A673 (cell line): ENCODE measurements at regions of chr12 and their contacts with region 1.

Region 1: GRCh38 chr12:75334384-75335030 is at the start of gene GLIPR1L1:
- DNase-seq: peak; percentile 92
- H3K4me3 ChIP-seq: peak within 1 kb of the TSS; percentile 19
- H3K27ac ChIP-seq: no peak within 1 kb of the TSS
- H3K4me1 ChIP-seq: no peaks in the 10 kb centered on the region
- H3K27me3 ChIP-seq: no peaks in the 10 kb centered on the region
- CTCF ChIP-seq: peak; percentile 87
- total RNA-seq, gene GLIPR1L1: not detected in 2 replicates

Region 2: GRCh38 chr12:74689071-74689655 is 645.3 kb before region 1 on chr12:
- CTCF ChIA-PET with region 1: no interaction called
- POLR2A ChIA-PET with region 1: no interaction called
- intact Hi-C with region 1: loop called (anchors 5 kb)
- DNase-seq: peak; percentile 61
- H3K4me3 ChIP-seq: no peak overlapping the region
- H3K27ac ChIP-seq: no peak overlapping the region
- H3K4me1 ChIP-seq: no peaks in the 10 kb centered on the region
- H3K27me3 ChIP-seq: no peaks in the 10 kb centered on the region
- CTCF ChIP-seq: peak; percentile 77

Region 3: DNA sequence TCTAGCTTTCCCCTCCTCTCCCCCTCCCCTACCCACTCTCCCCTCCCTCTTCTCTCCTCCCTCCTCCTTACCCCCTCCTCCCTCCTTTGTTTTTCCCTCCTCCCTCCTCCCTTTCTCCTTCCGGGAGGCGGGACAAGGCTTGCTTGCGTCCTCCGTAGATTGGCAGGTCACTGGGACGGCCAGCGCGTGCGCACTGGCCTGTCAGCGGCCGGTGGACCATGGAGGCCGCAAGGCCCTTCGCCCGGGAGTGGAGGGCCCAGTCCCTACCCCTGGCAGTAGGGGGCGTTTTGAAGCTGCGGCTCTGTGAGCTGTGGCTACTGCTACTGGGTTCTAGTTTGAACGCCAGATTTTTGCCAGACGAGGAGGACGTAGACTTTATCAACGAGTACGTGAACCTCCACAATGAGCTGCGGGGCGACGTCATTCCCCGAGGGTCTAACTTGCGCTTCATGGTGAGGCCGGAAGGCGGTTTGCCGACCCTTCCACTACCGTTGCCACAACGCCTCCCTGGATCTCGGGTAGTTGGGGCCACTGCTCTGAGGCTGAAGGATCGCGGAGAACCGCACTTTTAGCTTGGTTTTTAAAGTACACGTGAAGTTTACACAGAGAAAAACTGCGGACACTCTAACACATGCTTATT is 56.5 kb after region 1 on chr12 and contains the start of gene GLIPR1L2:
- CTCF ChIA-PET with region 1: interaction called, 6 read pairs
- POLR2A ChIA-PET with region 1: no interaction called
- intact Hi-C with region 1: loop called (anchors 5 kb)
- DNase-seq: peak; percentile 99
- H3K4me3 ChIP-seq: peak within 1 kb of the TSS; percentile 56
- H3K27ac ChIP-seq: peak within 1 kb of the TSS; percentile 84
- H3K4me1 ChIP-seq: peaks cover 9% of the 10 kb centered on the region
- H3K27me3 ChIP-seq: no peaks in the 10 kb centered on the region
- CTCF ChIP-seq: peak; percentile 92
- total RNA-seq, gene GLIPR1L2: 0.28 TPM in 1 of 2 replicates, not detected in the other

Region 4: DNA sequence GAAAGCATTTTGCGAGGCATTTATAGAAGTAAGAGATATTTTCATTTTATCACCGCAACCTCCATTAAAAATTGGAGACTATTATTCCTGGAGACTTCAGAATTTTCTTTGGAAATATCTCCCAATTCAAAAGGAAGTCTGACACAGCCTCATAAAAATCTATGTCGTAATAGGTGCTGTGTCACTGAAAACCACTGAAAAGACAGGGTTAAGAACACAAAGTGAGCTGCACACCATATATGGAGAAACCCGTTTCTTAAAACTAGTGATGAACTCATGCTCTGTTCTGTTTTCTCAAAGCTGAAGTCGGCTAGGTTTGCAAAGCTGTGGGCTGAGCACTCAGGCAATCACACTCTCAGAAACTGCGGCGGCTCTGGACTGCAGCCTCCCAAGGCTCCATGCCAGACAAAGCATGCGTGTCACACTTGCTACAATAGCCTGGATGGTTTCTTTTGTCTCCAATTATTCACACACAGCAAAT is 146.0 kb after region 1 on chr12 and contains the start of gene GLIPR1:
- CTCF ChIA-PET with region 1: interaction called, 5 read pairs
- POLR2A ChIA-PET with region 1: no interaction called
- intact Hi-C with region 1: loop called (anchors 5 kb)
- DNase-seq: peak; percentile 84
- H3K4me3 ChIP-seq: peak within 1 kb of the TSS; percentile 28
- H3K27ac ChIP-seq: peak within 1 kb of the TSS; percentile 65
- H3K4me1 ChIP-seq: peaks cover 27% of the 10 kb centered on the region
- H3K27me3 ChIP-seq: no peaks in the 10 kb centered on the region
- CTCF ChIP-seq: no peak
- total RNA-seq, gene GLIPR1: 11.3 and 19.7 TPM in 2 replicates

Region 5: GRCh38 chr12:75505706-75506312 is 171.3 kb after region 1 on chr12:
- CTCF ChIA-PET with region 1: no interaction called
- POLR2A ChIA-PET with region 1: no interaction called
- intact Hi-C with region 1: loop called (anchors 5 kb)
- DNase-seq: peak; percentile 39
- H3K4me3 ChIP-seq: no peak overlapping the region
- H3K27ac ChIP-seq: no peak overlapping the region
- H3K4me1 ChIP-seq: peaks cover 5% of the 10 kb centered on the region
- H3K27me3 ChIP-seq: no peaks in the 10 kb centered on the region
- CTCF ChIP-seq: peak; percentile 73

Region 6: DNA sequence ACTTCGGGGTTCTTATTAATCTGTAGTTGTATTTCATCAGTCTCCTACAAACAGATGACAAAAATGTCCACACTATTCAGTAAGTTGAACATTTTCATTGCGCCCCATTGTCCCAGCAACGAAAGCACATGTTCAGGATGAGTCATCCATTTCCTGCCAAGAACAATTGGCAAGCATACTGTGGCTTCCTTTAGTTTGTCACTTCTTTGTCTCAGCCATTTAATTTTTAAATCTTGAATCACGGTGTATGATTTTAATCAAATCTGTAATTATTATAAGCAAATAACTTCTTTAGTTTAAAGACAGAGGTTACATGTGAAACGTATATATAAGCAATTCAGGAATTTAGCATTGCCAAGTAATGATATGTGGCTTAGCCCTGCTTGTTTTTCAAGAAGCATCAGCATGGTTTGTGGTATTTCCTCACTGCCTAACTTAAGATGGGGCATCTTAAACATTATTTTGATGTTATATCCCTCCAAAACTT is 388.2 kb after region 1 on chr12:
- CTCF ChIA-PET with region 1: no interaction called
- POLR2A ChIA-PET with region 1: no interaction called
- intact Hi-C with region 1: no loop called
- DNase-seq: peak; percentile 96
- H3K4me3 ChIP-seq: no peak overlapping the region
- H3K27ac ChIP-seq: peak overlapping the region; percentile 92
- H3K4me1 ChIP-seq: peaks cover 73% of the 10 kb centered on the region
- H3K27me3 ChIP-seq: no peaks in the 10 kb centered on the region
- CTCF ChIP-seq: no peak

Region 7: GRCh38 chr12:76031537-76032073 is 697.1 kb after region 1 on chr12 and contains the start of gene PHLDA1:
- CTCF ChIA-PET with region 1: no interaction called
- POLR2A ChIA-PET with region 1: no interaction called
- intact Hi-C with region 1: loop called (anchors 10 kb)
- DNase-seq: peak; percentile 97
- H3K4me3 ChIP-seq: peak within 1 kb of the TSS; percentile 84
- H3K27ac ChIP-seq: peak within 1 kb of the TSS; percentile 86
- H3K4me1 ChIP-seq: peaks cover 9% of the 10 kb centered on the region
- H3K27me3 ChIP-seq: no peaks in the 10 kb centered on the region
- CTCF ChIP-seq: peak; percentile 68
- total RNA-seq, gene PHLDA1: 3.4 and 4.9 TPM in 2 replicates

Region 8: DNA sequence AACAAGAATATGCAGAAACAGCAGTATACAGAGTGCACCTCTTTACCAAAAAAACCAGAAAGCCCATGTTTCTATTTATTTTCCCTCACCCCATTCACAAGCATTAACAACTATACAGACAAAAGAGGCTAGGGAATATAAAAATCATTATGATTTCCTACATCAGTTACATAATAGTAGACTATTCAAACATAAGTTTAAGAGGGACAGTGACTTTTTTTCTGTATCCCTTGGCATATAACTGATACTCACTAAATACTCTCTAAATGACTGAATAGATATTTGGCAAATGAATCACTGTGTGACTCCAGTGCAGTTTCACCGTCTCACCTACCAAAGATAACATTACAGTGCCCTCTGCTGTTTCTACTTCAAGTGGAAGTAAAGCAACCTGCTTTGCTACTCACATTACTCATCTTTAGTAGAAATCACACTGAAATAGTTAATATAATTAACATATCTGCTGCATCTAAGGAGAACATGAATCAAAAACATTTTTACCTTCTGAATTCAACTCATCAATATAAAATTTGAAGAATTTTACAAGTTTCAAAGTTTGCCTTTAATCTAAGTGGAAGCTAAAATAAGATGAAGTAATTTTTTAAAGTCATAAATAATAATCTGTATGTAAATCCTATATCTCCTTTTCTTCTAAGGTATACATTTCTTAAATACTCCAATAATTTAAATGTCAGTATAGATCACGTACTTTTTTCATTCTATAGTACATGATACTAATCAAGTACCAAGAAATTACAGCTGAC is 1121.3 kb after region 1 on chr12:
- CTCF ChIA-PET with region 1: no interaction called
- POLR2A ChIA-PET with region 1: no interaction called
- intact Hi-C with region 1: loop called (anchors 10 kb)
- DNase-seq: peak; percentile 82
- H3K4me3 ChIP-seq: peak overlapping the region; percentile 8
- H3K27ac ChIP-seq: no peak overlapping the region
- H3K4me1 ChIP-seq: peaks cover 26% of the 10 kb centered on the region
- H3K27me3 ChIP-seq: no peaks in the 10 kb centered on the region
- CTCF ChIP-seq: peak; percentile 78